SK-N-SH (cell line): ENCODE measurements at regions of chr11 and their contacts with region 1.

Region 1: GRCh38 chr11:65013692-65014145 is 241 bp upstream of the ARL2 start:
- DNase-seq: peak; percentile 98
- H3K4me3 ChIP-seq: peak overlapping the region; percentile 69 to 70
- H3K27ac ChIP-seq: peak overlapping the region; percentile 95
- H3K4me1 ChIP-seq: peaks cover 4% of the 10 kb centered on the region in 2 experiments; a peak in 2 of 4 replicates
- H3K27me3 ChIP-seq: no peaks in the 10 kb centered on the region
- CTCF ChIP-seq: peak; percentile 70
- EP300 ChIP-seq: no peak
- RAD21 ChIP-seq: no peak; the same call in 1 of the 2 replicates

Region 2: DNA sequence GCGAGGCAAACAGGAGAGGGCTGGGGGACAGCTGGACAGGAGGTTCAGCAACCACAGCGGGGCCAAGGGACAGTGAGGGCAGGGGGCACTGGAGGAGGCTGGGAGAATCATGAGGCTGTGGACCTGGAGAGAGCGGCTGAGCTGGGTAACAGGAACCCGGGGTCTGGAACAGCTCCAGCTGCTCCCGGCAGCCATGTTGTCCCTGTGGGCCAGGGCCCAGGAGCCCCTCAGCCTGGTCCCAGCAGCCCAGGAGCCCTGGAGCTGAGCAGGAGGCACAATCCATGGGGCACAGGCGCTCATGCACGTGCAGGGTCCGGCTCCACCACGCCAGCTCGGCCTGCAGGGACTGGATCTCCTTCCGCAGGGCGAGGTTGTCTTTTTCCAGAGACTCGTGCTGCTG is 24.3 kb before region 1 on chr11:
- CTCF ChIA-PET with region 1: interaction called, 13 read pairs
- POLR2A ChIA-PET with region 1: no interaction called
- DNase-seq: no peak
- H3K4me3 ChIP-seq: no peak overlapping the region
- H3K27ac ChIP-seq: no peak overlapping the region
- H3K4me1 ChIP-seq: peaks cover 0 to 6% of the 10 kb centered on the region in 2 experiments; a peak in 1 of 4 replicates
- H3K27me3 ChIP-seq: no peaks in the 10 kb centered on the region
- CTCF ChIP-seq: no peak
- EP300 ChIP-seq: no peak
- RAD21 ChIP-seq: no peak

Region 3: DNA sequence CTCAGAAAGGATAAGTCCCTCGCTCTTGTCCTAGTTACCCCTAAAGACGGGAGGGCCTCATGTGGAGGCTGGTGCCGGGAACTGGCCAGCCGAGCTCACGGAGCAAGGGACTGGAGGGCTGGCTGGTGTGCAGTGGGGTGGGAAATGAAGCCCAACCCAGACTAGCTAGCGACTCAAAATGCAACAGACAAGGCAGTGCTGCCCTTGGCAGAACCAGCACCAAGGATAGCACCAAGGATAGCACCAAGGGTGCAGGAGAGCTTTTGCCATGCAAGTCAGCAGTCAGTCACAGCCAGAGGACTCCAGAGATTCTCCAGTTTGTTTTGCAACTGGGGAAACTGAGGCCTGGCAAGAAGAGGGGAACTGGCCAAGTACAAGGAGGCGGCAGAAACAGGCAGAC is 10.4 kb before region 1 on chr11:
- CTCF ChIA-PET with region 1: interaction called, 26 read pairs
- POLR2A ChIA-PET with region 1: interaction called, 3 read pairs
- DNase-seq: no peak
- H3K4me3 ChIP-seq: no peak overlapping the region
- H3K27ac ChIP-seq: no peak overlapping the region
- H3K4me1 ChIP-seq: peaks cover 0 to 5% of the 10 kb centered on the region in 2 experiments; a peak in 1 of 4 replicates
- H3K27me3 ChIP-seq: no peaks in the 10 kb centered on the region
- CTCF ChIP-seq: no peak
- EP300 ChIP-seq: no peak
- RAD21 ChIP-seq: no peak

Region 4: DNA sequence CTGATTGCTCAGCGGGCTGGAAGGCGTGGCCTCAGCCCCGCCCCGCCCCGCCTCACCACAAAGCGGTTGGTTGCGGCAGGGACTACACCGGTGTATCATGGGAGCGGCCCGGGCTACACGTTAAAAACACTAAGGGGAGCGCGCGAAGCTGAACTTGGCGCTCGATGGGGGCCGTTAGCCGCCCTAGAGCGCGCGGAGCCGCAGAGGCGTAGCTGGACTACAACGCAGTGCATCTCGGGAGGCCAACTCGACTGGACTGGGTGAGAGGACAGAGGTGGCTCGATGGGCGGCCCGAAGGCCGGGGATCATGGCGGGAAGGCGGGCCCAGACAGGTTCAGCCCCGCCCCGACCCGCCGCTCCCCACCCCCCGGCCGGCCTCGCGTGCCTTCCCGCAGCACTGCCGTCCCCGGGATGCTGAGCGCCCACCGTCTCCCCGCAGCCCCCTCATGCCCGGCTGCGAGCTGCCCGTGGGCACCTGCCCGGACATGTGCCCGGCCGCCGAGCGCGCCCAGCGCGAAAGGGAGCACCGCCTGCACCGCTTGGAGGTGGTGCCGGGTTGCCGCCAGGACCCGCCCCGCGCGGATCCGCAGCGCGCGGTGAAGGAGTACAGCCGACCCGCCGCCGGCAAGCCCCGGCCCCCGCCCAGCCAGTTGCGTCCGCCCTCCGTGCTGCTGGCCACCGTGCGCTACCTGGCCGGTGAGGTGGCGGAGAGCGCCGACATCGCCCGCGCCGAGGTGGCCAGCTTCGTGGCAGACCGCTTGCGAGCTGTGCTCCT is 27.3 kb after region 1 on chr11 and contains the start of gene SAC3D1:
- CTCF ChIA-PET with region 1: interaction called, 35 read pairs
- POLR2A ChIA-PET with region 1: no interaction called
- DNase-seq: peak; percentile 96
- H3K4me3 ChIP-seq: peak within 1 kb of the TSS; percentile 76 to 81
- H3K27ac ChIP-seq: peak within 1 kb of the TSS; percentile 80 to 91
- H3K4me1 ChIP-seq: peaks cover 5 to 7% of the 10 kb centered on the region in 2 experiments; a peak in 2 of 4 replicates
- H3K27me3 ChIP-seq: no peaks in the 10 kb centered on the region
- CTCF ChIP-seq: no peak
- EP300 ChIP-seq: no peak
- RAD21 ChIP-seq: no peak
- polyA plus RNA-seq, gene SAC3D1: 13.1 and 22.5 TPM in 2 replicates

Region 5: GRCh38 chr11:65111744-65112414 is 98.2 kb after region 1 on chr11 and contains the start of gene TM7SF2:
- CTCF ChIA-PET with region 1: interaction called, 43 read pairs
- POLR2A ChIA-PET with region 1: interaction called, 5 read pairs
- DNase-seq: peak; percentile 98
- H3K4me3 ChIP-seq: peak within 1 kb of the TSS; percentile 64 to 83
- H3K27ac ChIP-seq: peak within 1 kb of the TSS in 1 of 2 experiments; percentile 89; a peak in 2 of 4 replicates
- H3K4me1 ChIP-seq: peaks cover 14 to 52% of the 10 kb centered on the region in 2 experiments; a peak in 3 of 4 replicates
- H3K27me3 ChIP-seq: no peaks in the 10 kb centered on the region
- CTCF ChIP-seq: no peak
- EP300 ChIP-seq: no peak
- RAD21 ChIP-seq: no peak
- polyA plus RNA-seq, gene TM7SF2: 87.8 and 90.0 TPM in 2 replicates